ENCODE measurements at regions of chr5 and their contacts with region 1.

Region 1: GRCh38 chr5:95903838-95904237 is 57.8 kb downstream of the ELL2 start:
- DNase-seq: no peak
- CTCF ChIP-seq: no peak

Region 2: DNA sequence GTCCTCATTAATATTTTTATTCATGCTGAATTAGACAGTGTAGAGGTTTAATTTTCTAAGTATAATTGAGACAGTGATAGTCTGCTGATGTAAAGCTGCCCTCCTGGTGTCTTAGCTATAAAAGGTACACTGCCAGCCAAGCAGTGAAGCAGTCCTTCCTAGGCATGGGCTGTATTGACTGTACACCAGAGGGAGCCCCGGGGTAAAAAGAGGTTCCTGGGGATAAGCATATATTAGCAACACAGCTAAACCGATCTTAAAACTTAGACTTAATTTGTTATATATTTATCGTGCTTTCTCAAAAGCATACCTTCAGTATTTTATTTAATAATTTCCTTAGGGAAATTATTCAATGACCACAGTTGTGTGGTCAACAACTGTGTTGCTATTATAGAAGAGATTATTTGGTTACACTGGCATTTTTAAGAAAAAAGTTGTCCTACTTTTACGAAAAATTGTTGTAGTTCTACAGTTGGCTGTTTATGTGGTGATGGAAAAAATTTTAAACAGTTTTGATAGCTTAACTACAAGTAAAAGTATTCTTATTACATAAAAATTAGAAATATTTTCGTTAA is 11.0 kb before region 1 on chr5:
- CTCF ChIA-PET with region 1: interaction called, 10 read pairs
- POLR2A ChIA-PET with region 1: no interaction called
- DNase-seq: peak; percentile 39
- CTCF ChIP-seq: peak; percentile 52

Region 3: DNA sequence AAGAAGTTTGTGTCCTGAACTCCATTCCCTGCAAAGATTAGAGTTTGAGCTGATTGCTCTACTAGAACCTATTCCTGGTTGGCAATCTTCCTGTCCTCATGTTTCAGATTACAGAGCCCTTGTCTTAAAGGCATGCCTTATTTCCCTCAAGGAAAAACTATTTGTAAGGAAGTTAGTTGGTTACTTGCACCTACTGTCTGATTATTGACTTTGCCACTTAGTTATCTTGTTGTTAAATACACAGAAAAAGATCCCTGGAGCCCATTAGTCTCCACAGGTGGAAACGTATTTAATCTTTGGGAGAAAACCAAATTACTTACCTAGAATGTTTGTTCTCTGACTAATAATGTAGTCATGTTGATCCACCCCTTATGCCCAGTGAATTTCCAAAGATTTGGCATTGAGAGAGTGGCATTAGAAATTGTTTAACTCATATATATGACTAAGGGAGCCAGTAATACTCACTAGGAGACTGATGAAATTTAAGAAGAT is 190.1 kb after region 1 on chr5:
- CTCF ChIA-PET with region 1: no interaction called
- POLR2A ChIA-PET with region 1: no interaction called
- DNase-seq: no peak
- CTCF ChIP-seq: no peak

Measured in GM10248 (cell line).